MCF 10A (cell line): ENCODE measurements at regions of chr3 and their contacts with region 1.

Region 1: GRCh38 chr3:24680214-24680967 is 185.7 kb upstream of the THRB start:
- DNase-seq: peak; percentile 69
- H3K4me3 Mint-ChIP-seq: no peak overlapping the region
- H3K27ac Mint-ChIP-seq: no peak overlapping the region
- H3K4me1 Mint-ChIP-seq: peaks cover 20% of the 10 kb centered on the region
- H3K27me3 Mint-ChIP-seq: no peaks in the 10 kb centered on the region
- CTCF ChIP-seq: peak; percentile 47

Region 2: GRCh38 chr3:23991683-23992628 is 688.4 kb before region 1 on chr3:
- CTCF ChIA-PET with region 1: interaction called, 12 read pairs
- POLR2A ChIA-PET with region 1: no interaction called
- intact Hi-C with region 1: no loop called
- DNase-seq: peak; percentile 65
- H3K4me3 Mint-ChIP-seq: no peak overlapping the region
- H3K27ac Mint-ChIP-seq: no peak overlapping the region
- H3K4me1 Mint-ChIP-seq: no peaks in the 10 kb centered on the region
- H3K27me3 Mint-ChIP-seq: no peaks in the 10 kb centered on the region
- CTCF ChIP-seq: no peak

Region 3: GRCh38 chr3:24018784-24019570 is 661.4 kb before region 1 on chr3:
- CTCF ChIA-PET with region 1: no interaction called
- POLR2A ChIA-PET with region 1: no interaction called
- intact Hi-C with region 1: no loop called
- DNase-seq: no peak
- H3K4me3 Mint-ChIP-seq: no peak overlapping the region
- H3K27ac Mint-ChIP-seq: no peak overlapping the region
- H3K4me1 Mint-ChIP-seq: no peaks in the 10 kb centered on the region
- H3K27me3 Mint-ChIP-seq: no peaks in the 10 kb centered on the region
- CTCF ChIP-seq: no peak

Region 4: DNA sequence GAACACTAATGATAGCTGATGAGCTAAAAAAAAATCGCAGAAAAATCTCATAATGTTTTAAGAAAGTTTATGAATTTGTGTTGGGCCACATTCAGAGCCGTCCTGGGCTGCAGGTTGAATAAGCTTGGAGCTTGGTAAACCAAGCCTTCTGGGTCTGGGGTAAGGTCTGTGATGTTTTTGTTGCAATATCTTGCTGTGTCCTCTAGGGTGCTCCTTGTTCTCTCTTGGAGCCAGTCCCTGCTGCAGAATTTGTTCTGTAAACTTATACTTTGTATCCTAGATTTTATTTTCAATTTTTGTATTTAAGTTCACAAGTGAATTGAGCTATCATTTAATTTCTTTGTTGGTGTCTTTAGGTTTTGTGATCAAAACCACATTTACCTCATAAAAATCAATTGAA is 591.6 kb before region 1 on chr3:
- CTCF ChIA-PET with region 1: interaction called, 3 read pairs
- POLR2A ChIA-PET with region 1: no interaction called
- intact Hi-C with region 1: loop called (anchors 5 kb)
- DNase-seq: peak; percentile 53
- H3K4me3 Mint-ChIP-seq: no peak overlapping the region
- H3K27ac Mint-ChIP-seq: no peak overlapping the region
- H3K4me1 Mint-ChIP-seq: no peaks in the 10 kb centered on the region
- H3K27me3 Mint-ChIP-seq: no peaks in the 10 kb centered on the region
- CTCF ChIP-seq: peak; percentile 53

Region 5: GRCh38 chr3:24237971-24238767 is 442.2 kb before region 1 on chr3:
- CTCF ChIA-PET with region 1: interaction called, 8 read pairs
- POLR2A ChIA-PET with region 1: interaction called, 4 read pairs
- intact Hi-C with region 1: loop called (anchors 1 kb)
- DNase-seq: peak; percentile 85
- H3K4me3 Mint-ChIP-seq: no peak overlapping the region
- H3K27ac Mint-ChIP-seq: peak overlapping the region; percentile 91
- H3K4me1 Mint-ChIP-seq: peaks cover 40% of the 10 kb centered on the region
- H3K27me3 Mint-ChIP-seq: no peaks in the 10 kb centered on the region
- CTCF ChIP-seq: peak; percentile 65

Region 6: DNA sequence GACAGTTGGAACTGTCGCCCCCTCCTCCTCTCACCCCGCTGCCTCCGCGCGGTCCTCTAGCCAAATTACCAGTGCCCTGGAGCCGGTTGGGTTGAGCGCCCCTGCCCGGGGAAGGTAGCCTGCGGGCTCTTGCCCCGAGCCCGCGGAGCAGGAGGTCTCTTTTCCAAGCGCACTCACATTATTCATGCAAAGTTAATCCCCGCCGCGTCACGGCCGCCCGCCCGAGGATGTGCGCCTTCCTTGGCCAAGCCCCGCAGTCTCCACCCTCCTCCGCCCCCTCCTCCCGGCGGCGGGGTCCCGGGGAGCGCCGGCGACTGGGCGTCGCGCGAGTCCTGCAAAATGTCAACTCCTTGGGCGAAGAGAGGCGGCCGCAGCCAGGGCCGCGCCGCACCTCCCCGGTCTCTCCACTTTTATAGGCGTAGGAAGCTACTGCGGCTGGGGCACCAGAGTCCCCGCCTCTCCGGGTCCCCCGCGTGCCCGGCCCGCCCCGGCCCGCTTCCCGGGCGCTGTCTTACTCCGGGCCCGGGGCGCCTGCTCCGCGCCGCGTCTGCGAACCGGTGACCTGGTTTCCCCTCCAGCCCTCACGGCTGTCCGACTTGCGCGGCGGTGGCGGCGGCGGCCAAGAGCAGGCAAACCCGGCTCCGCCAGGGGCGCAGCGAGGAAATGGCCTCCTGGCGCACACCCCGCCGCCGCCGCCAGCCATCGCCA is 185.6 kb before region 1 on chr3 and contains the start of gene THRB:
- CTCF ChIA-PET with region 1: no interaction called
- POLR2A ChIA-PET with region 1: no interaction called
- intact Hi-C with region 1: loop called (anchors 2 kb)
- DNase-seq: peak; percentile 60
- H3K4me3 Mint-ChIP-seq: peak within 1 kb of the TSS; percentile 94
- H3K27ac Mint-ChIP-seq: peak within 1 kb of the TSS; percentile 87
- H3K4me1 Mint-ChIP-seq: peaks cover 16% of the 10 kb centered on the region
- H3K27me3 Mint-ChIP-seq: no peaks in the 10 kb centered on the region
- CTCF ChIP-seq: no peak
- total RNA-seq, gene THRB: 3.8 and 4.2 TPM in 2 replicates

Region 7: GRCh38 chr3:24704496-24704895 is 24.1 kb after region 1 on chr3:
- CTCF ChIA-PET with region 1: interaction called, 10 read pairs
- POLR2A ChIA-PET with region 1: no interaction called
- intact Hi-C with region 1: no loop called
- DNase-seq: peak; percentile 96
- H3K4me3 Mint-ChIP-seq: no peak overlapping the region
- H3K27ac Mint-ChIP-seq: no peak overlapping the region
- H3K4me1 Mint-ChIP-seq: peaks cover 15% of the 10 kb centered on the region
- H3K27me3 Mint-ChIP-seq: no peaks in the 10 kb centered on the region
- CTCF ChIP-seq: no peak